Thyroid gland (tissue), 4 donors: ENCODE measurements at regions of chr2 and their contacts with region 1.

Region 1: DNA sequence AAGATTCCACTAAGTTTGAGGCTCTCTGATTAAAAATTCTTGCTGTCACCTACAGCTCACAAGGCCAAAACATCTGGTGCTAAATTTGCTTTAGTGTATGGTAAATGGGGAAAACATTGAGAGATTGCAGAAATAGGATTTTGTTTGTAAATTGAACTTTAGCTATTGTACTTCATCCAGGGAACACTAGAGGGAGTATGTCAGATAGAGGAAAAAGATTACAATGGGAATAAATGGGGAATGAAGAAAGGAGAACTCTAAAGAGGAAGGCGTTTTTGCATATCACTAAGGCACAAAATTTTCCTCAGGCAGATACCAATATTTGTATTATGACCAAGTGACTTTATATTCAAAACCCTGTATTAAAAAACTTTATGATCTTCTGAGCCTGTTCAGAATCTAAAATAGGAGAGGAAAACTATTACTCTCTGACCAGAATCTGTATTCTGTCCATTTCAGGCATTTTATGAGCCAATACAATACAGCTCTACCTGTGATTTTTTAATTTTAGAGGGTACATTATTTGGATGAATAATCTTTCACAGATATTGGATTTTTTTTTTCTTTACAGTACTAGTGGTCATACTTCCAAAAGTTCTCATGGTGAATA is 52.3 kb upstream of the ITGB6 start:
- DNase-seq: no peak
- H3K4me3 ChIP-seq: no peak overlapping the region
- H3K27ac ChIP-seq: peak overlapping the region; percentile 45 to 69 (median 64)
- H3K4me1 ChIP-seq: peaks cover 16 to 20% of the 10 kb centered on the region in 2 donors
- H3K27me3 ChIP-seq: no peaks in the 10 kb centered on the region
- CTCF ChIP-seq: peak; percentile 61 to 80 (median 76)
- POLR2A ChIP-seq: no peak

Region 2: GRCh38 chr2:160994141-160995002 is 742.0 kb after region 1 on chr2:
- intact Hi-C with region 1: loop called (anchors 10 kb)
- DNase-seq: peak; percentile 59 to 61
- H3K4me3 ChIP-seq: no peak overlapping the region
- H3K27ac ChIP-seq: peak overlapping the region; percentile 48 to 71 (median 67)
- H3K4me1 ChIP-seq: peaks cover 0 to 4% of the 10 kb centered on the region in 2 donors
- H3K27me3 ChIP-seq: no peaks in the 10 kb centered on the region
- CTCF ChIP-seq: peak; percentile 50 to 91 (median 84)
- POLR2A ChIP-seq: no peak